Heart left ventricle (tissue), 16 donors: ENCODE measurements at regions of chr4 and their contacts with region 1.

Region 1: GRCh38 chr4:111890412-111890811 is 254.8 kb upstream of the FAM241A start:
- DNase-seq: no peak
- ATAC-seq: no peak
- H3K4me3 ChIP-seq: no peak overlapping the region
- H3K27ac ChIP-seq: no peak overlapping the region
- H3K4me1 ChIP-seq: no peaks in the 10 kb centered on the region
- H3K27me3 ChIP-seq: no peaks in the 10 kb centered on the region
- CTCF ChIP-seq: no peak
- POLR2A ChIP-seq: no peak

Region 2: GRCh38 chr4:111330786-111331185 is 559.6 kb before region 1 on chr4:
- intact Hi-C with region 1: loop called in 1 of 10 experiments (anchors 10 kb)
- DNase-seq: no peak
- ATAC-seq: no peak
- H3K4me3 ChIP-seq: no peak overlapping the region
- H3K27ac ChIP-seq: no peak overlapping the region
- H3K4me1 ChIP-seq: no peaks in the 10 kb centered on the region
- H3K27me3 ChIP-seq: no peaks in the 10 kb centered on the region
- CTCF ChIP-seq: no peak
- POLR2A ChIP-seq: no peak

Region 3: GRCh38 chr4:111836601-111837000 is 53.8 kb before region 1 on chr4:
- intact Hi-C with region 1: no loop called
- DNase-seq: no peak
- ATAC-seq: no peak
- H3K4me3 ChIP-seq: no peak overlapping the region
- H3K27ac ChIP-seq: no peak overlapping the region
- H3K4me1 ChIP-seq: no peaks in the 10 kb centered on the region
- H3K27me3 ChIP-seq: no peaks in the 10 kb centered on the region
- CTCF ChIP-seq: no peak
- POLR2A ChIP-seq: no peak